Gastrocnemius medialis (tissue), 4 donors: ENCODE measurements at regions of chr2 and their contacts with region 1.

Region 1: GRCh38 chr2:25851740-25852503 is 26.4 kb downstream of the ASXL2 start:
- DNase-seq: no peak
- ATAC-seq: peak; percentile 75 to 93
- H3K4me3 ChIP-seq: no peak overlapping the region
- H3K27ac ChIP-seq: peak overlapping the region; percentile 38 to 44 (median 44)
- H3K4me1 ChIP-seq: peaks cover 44 to 46% of the 10 kb centered on the region in 2 donors
- H3K27me3 ChIP-seq: no peaks in the 10 kb centered on the region
- CTCF ChIP-seq: peak; percentile 53 to 76 (median 67)
- POLR2A ChIP-seq: no peak

Region 2: GRCh38 chr2:25899404-25899970 is 47.6 kb after region 1 on chr2:
- in situ Hi-C with region 1: no loop called
- intact Hi-C with region 1: loop called (anchors 5 kb)
- DNase-seq: no peak
- ATAC-seq: no peak
- H3K4me3 ChIP-seq: no peak overlapping the region
- H3K27ac ChIP-seq: no peak overlapping the region
- H3K4me1 ChIP-seq: peaks cover 10 to 13% of the 10 kb centered on the region in 2 donors
- H3K27me3 ChIP-seq: no peaks in the 10 kb centered on the region
- CTCF ChIP-seq: no peak
- POLR2A ChIP-seq: no peak

Region 3: GRCh38 chr2:25936889-25937545 is 85.1 kb after region 1 on chr2:
- in situ Hi-C with region 1: no loop called
- intact Hi-C with region 1: loop called (anchors 5 kb)
- DNase-seq: no peak
- ATAC-seq: peak; percentile 38 to 39
- H3K4me3 ChIP-seq: no peak overlapping the region
- H3K27ac ChIP-seq: peak overlapping the region; percentile 64 to 85 (median 72)
- H3K4me1 ChIP-seq: peaks cover 28 to 32% of the 10 kb centered on the region in 2 donors
- H3K27me3 ChIP-seq: no peaks in the 10 kb centered on the region
- CTCF ChIP-seq: no peak
- POLR2A ChIP-seq: no peak

Region 4: GRCh38 chr2:25951071-25951547 is 99.2 kb after region 1 on chr2:
- in situ Hi-C with region 1: no loop called
- intact Hi-C with region 1: loop called (anchors 1 kb)
- DNase-seq: peak; percentile 59 to 71
- ATAC-seq: peak; percentile 91 to 97
- H3K4me3 ChIP-seq: no peak overlapping the region
- H3K27ac ChIP-seq: peak overlapping the region in 2 of 4 donors; percentile 29 to 48
- H3K4me1 ChIP-seq: no peaks in the 10 kb centered on the region
- H3K27me3 ChIP-seq: no peaks in the 10 kb centered on the region
- CTCF ChIP-seq: peak; percentile 90 to 95 (median 92)
- POLR2A ChIP-seq: no peak

Region 5: GRCh38 chr2:26144953-26145680 is 293.2 kb after region 1 on chr2:
- in situ Hi-C with region 1: no loop called
- intact Hi-C with region 1: loop called (anchors 2 kb)
- DNase-seq: peak in 1 of 2 donors; percentile 49
- ATAC-seq: peak; percentile 57 to 61
- H3K4me3 ChIP-seq: no peak overlapping the region
- H3K27ac ChIP-seq: peak overlapping the region in 1 of 4 donors; percentile 13
- H3K4me1 ChIP-seq: peaks cover 3 to 10% of the 10 kb centered on the region in 2 donors
- H3K27me3 ChIP-seq: no peaks in the 10 kb centered on the region
- CTCF ChIP-seq: peak; percentile 78 to 85 (median 81)
- POLR2A ChIP-seq: no peak